WTC11 (cell line): ENCODE measurements at regions of chr16 and their contacts with region 1.

Region 1: GRCh38 chr16:67104061-67104460 is 5.7 kb upstream of the PHAF1 start:
- DNase-seq: peak; percentile 60
- ATAC-seq: peak; percentile 96
- H3K4me3 Mint-ChIP-seq: no peak overlapping the region
- H3K27ac Mint-ChIP-seq: no peak overlapping the region; the same call in none of the 2 replicates
- H3K4me1 Mint-ChIP-seq: 0 out of 2 replicates have a peak, but pooled peaks cover 2% of the 10 kb centered on the region
- H3K27me3 Mint-ChIP-seq: peaks cover 5% of the 10 kb centered on the region; the same call in 1 of the 2 replicates
- CTCF ChIP-seq: no peak

Region 2: DNA sequence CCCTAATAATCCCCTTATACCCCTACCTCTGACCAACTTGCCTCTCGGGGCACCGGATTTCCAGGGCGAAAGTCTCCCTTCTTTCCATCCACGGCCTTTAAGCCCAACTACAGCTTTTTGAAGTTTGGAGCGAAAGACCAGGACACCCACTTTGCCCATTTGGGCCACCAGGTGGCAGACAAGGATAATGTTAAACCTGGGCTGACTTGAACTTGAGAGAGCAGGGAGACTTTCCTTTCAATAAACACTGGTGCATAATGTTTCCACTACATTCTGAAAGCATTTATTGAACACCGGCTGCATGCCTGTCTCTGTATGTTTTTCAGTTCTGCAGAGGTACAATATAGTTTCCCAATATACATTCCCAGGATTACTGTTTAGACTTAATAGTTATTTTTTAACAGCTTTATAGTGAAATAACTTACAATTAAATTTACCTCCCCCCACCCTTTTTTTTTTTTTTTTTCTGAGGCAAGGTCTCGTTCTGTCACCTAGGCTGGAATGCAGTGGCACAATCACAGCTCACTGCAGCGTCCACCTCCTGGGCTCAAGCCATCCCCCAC is 149.9 kb before region 1 on chr16:
- CTCF ChIA-PET with region 1: interaction called, 21 read pairs
- POLR2A ChIA-PET with region 1: no interaction called
- DNase-seq: peak; percentile 85
- ATAC-seq: peak; percentile 88
- H3K4me3 Mint-ChIP-seq: no peak overlapping the region
- H3K27ac Mint-ChIP-seq: no peak overlapping the region
- H3K4me1 Mint-ChIP-seq: peaks cover 4% of the 10 kb centered on the region
- H3K27me3 Mint-ChIP-seq: peaks cover 40% of the 10 kb centered on the region
- CTCF ChIP-seq: peak; percentile 62; the same call in 1 of the 2 replicates

Region 3: GRCh38 chr16:67000384-67001351 is 103.4 kb before region 1 on chr16:
- CTCF ChIA-PET with region 1: interaction called, 11 read pairs
- POLR2A ChIA-PET with region 1: no interaction called
- DNase-seq: peak; percentile 73
- ATAC-seq: peak; percentile 90
- H3K4me3 Mint-ChIP-seq: peak overlapping the region; percentile 66
- H3K27ac Mint-ChIP-seq: no peak overlapping the region
- H3K4me1 Mint-ChIP-seq: peaks cover 4% of the 10 kb centered on the region
- H3K27me3 Mint-ChIP-seq: peaks cover 80% of the 10 kb centered on the region
- CTCF ChIP-seq: no peak

Region 4: DNA sequence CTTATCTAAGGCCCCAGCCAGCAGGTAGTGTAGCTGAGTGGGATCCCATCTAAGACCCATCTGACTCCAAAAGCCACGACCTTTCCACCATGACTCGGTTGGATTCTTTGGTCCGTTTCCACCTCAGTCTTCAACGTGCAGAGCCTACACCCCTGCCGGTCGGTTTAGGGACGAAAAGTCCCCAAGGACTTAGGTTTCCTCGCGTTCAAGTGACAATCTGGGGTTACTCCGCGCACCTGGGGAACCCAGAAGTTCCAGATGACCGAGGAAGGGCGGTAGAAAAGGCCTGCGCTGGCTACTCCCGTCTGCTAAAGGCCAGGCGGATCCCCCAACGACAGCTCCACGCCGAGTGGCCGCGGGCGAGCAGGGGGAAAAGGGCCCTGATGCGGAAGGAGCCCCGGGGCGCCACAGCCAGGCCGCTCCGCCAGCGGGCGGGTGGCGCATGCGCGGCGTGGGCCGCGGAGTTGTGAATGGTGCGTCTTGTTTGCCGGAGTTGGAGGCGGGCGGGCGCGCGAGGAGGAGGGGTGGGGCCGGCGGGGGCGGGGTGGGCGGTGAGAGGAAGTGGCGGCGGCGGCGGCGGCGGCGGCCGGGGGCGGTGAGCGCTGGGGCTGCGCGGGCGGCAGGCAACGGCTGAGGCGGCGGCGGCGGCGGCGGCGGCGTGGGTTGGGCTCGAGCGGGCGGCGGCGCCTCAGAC is 75.4 kb before region 1 on chr16 and contains the start of gene CBFB:
- CTCF ChIA-PET with region 1: interaction called, 11 read pairs
- POLR2A ChIA-PET with region 1: no interaction called
- DNase-seq: peak; percentile 78
- ATAC-seq: peak; percentile 83
- H3K4me3 Mint-ChIP-seq: peak within 1 kb of the TSS; percentile 84
- H3K27ac Mint-ChIP-seq: no peak within 1 kb of the TSS
- H3K4me1 Mint-ChIP-seq: peaks cover 16% of the 10 kb centered on the region; the same call in 1 of the 2 replicates
- H3K27me3 Mint-ChIP-seq: peaks cover 10% of the 10 kb centered on the region
- CTCF ChIP-seq: no peak
- total RNA-seq, gene CBFB: 36.9 to 40.9 TPM (median 37.1 TPM) in 3 replicates

Region 5: DNA sequence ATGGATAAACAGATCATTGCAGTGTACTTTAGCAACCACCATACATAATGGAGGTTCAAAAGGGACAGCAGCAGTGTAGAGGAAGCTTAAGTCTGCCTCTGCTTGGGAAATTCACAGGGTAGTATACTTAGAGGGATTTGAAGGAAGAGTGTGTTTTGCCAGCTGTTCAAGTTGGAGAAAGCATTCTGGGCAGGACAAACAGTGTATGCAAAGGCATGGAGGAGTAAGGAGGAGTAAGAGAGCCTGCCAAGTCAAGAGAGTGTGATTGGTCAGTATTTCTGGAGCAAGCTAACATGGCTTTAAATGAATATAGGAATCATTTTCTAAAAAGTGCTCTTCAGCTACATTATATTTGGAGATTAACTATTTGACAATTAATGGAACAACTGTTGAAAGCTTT is 17.2 kb before region 1 on chr16:
- CTCF ChIA-PET with region 1: interaction called, 10 read pairs
- POLR2A ChIA-PET with region 1: no interaction called
- DNase-seq: no peak
- ATAC-seq: no peak
- H3K4me3 Mint-ChIP-seq: no peak overlapping the region
- H3K27ac Mint-ChIP-seq: no peak overlapping the region; the same call in 1 of the 2 replicates
- H3K4me1 Mint-ChIP-seq: no peaks in the 10 kb centered on the region
- H3K27me3 Mint-ChIP-seq: no peaks in the 10 kb centered on the region
- CTCF ChIP-seq: no peak

Region 6: DNA sequence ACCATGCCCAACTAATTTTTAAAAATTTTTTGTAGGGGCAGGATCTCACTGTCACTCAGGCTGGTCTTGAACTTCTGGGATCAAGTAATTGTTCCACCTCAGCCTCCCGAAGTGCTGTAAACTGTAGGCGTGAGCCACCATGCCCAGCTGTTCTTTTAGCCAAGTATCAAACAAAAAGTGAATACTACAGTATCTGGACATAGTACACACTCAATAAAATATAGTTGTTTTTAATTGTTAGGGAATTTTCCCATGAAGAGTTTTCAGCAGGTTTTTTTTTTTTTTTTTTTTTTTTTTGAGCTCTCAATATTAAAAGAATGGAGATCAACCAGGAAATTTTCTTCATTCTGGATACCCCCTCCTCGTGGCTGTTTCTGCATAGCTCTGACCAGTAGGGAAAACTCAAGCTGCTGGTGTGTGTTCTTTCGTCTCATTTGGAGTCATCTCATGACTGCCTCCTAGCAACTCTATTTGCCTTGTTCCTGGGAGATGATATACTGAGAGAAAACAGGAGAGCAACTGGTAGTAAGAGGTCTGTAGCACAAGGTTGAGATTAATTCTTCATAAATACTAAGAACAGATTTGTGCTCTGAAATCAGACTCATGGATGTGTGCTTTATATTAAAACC is 10.8 kb before region 1 on chr16:
- CTCF ChIA-PET with region 1: interaction called, 11 read pairs
- POLR2A ChIA-PET with region 1: no interaction called
- DNase-seq: no peak
- ATAC-seq: no peak
- H3K4me3 Mint-ChIP-seq: no peak overlapping the region
- H3K27ac Mint-ChIP-seq: no peak overlapping the region
- H3K4me1 Mint-ChIP-seq: no peaks in the 10 kb centered on the region
- H3K27me3 Mint-ChIP-seq: no peaks in the 10 kb centered on the region
- CTCF ChIP-seq: no peak

Region 7: DNA sequence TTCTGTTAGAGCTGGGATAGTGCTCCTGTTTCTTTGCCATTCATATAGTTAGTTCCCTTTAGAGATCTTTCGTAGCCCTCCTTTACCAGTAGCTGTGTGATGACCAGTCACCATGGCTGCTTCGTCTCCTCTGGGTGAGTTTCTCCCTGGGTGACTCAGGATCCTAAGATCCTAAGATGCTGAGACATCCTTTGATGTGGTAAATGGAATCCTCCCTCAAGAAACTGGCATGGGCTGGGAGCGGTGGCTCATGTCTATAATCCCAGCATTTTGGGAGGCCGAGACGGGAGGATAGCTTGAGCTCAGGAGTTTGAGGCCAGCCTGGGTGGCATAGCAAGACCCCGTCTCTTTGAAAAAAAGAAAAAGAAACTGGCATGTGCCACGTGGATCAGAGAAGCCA is 11.6 kb after region 1 on chr16:
- CTCF ChIA-PET with region 1: interaction called, 28 read pairs
- POLR2A ChIA-PET with region 1: no interaction called
- DNase-seq: no peak
- ATAC-seq: no peak
- H3K4me3 Mint-ChIP-seq: no peak overlapping the region
- H3K27ac Mint-ChIP-seq: no peak overlapping the region
- H3K4me1 Mint-ChIP-seq: peaks cover 16% of the 10 kb centered on the region
- H3K27me3 Mint-ChIP-seq: no peaks in the 10 kb centered on the region
- CTCF ChIP-seq: no peak

Region 8: DNA sequence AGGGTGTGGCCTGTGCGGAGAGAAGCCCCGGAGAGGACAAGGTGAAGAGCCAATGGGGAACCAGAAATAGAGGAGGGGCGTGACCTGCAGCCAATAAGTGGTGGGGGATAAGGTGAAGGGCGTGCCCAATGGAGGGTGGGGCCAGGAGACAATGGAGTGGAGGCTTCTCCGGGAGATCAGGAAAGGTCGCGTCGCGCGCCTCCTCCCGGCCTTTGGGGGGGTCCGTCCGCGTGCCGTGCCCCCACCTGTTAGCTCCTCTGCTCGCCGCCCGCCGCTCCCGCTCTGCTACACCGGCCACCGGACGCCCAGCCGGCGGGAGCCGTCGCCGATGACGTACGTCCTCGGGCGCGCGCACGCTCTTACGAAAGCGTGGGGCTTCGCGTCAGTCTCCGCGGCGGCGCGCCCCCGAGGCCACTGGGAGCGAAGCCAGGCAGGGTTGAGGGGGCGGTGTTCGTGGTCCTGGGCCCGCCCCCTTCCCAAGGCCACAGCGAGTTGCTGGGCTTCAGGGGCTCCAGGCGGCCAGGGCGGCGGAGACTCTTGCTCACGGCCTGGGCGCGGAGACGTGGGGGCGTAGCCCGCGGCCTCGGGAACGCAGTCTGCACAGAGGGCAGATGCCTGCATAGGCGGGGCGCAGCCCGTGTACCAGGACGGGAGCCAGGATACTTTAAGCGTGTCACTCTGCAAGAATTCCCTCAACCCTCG is 79.7 kb after region 1 on chr16 and contains the start of gene MATCAP1:
- CTCF ChIA-PET with region 1: no interaction called
- POLR2A ChIA-PET with region 1: no interaction called
- DNase-seq: peak; percentile 94
- ATAC-seq: peak; percentile 90
- H3K4me3 Mint-ChIP-seq: peak within 1 kb of the TSS; percentile 82
- H3K27ac Mint-ChIP-seq: no peak within 1 kb of the TSS
- H3K4me1 Mint-ChIP-seq: peaks cover 20% of the 10 kb centered on the region
- H3K27me3 Mint-ChIP-seq: peaks cover 31% of the 10 kb centered on the region
- CTCF ChIP-seq: no peak
- total RNA-seq, gene MATCAP1: 40.8 to 54.3 TPM (median 50.5 TPM) in 3 replicates

Region 9: DNA sequence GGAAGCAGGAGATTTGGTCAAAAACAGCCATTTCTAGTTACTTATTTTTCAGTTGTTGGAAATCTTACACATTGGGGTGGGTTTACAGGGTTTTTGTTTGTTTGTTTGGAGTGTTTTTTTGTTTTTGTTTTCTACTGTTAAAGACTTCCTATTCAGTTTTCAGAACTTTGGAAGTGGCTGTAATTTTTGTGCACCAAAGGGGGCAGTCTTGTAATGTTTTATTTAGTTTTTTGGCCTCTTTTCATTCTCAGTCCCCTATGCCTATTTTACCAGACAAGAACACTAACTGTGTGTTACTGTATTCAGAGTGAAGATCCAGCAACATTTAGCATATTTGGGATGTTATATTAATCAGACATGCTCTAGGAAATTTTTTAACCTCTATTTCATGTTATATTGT is 268.6 kb after region 1 on chr16:
- CTCF ChIA-PET with region 1: no interaction called
- POLR2A ChIA-PET with region 1: no interaction called
- DNase-seq: no peak
- ATAC-seq: no peak
- H3K4me3 Mint-ChIP-seq: no peak overlapping the region
- H3K27ac Mint-ChIP-seq: no peak overlapping the region
- H3K4me1 Mint-ChIP-seq: no peaks in the 10 kb centered on the region
- H3K27me3 Mint-ChIP-seq: peaks cover 9% of the 10 kb centered on the region
- CTCF ChIP-seq: no peak